Dorsolateral prefrontal cortex (tissue), 120 donors: ENCODE measurements at regions of chr16 and their contacts with region 1.

Region 1: DNA sequence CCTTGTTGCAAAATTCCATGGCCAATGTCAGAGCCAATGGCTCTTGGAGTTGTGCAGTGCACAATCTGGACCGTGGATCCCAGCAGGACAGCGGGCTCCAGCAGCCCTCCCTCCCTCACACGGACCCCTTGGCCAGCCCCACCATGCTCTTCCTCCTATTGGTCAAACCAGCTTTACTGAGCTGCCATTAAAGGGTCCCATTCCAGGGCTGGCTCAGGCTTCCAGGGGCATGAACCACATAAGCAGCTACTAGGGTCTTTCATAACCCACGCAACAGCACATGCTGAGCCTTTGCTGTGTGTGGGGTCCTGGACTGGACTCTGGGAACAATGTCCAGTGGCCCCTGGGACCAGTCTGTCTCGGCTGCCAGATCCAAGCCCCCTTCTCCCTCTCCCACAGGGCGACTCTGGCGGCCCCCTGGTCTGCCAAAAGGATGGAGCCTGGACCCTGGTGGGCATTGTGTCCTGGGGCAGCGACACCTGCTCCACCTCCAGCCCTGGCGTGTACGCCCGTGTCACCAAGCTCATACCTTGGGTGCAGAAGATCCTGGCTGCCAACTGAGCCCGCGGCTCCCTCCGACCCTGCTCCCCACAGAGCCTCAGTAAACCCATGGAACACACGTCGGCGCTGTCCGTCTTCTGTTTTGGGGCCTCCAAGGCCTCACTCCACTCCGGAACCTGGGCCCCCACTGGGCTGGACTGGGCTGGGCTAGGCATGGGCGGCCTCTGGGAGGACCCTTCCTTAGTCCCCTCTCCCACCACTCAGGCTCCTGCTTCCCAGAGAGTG is 5.7 kb downstream of the CTRB1 start:
- DNase-seq: no peak
- H3K4me3 ChIP-seq: no peak overlapping the region
- H3K27ac ChIP-seq: no peak overlapping the region
- H3K27me3 ChIP-seq: peaks cover 0 to 3% (median 0%) of the 10 kb centered on the region in 45 donors
- CTCF ChIP-seq: no peak

Region 2: GRCh38 chr16:75206749-75207451 is 17.6 kb before region 1 on chr16 and contains the start of gene CTRB2:
- intact Hi-C with region 1: loop called in 1 of 2 experiments (anchors 2 kb)
- DNase-seq: no peak
- H3K4me3 ChIP-seq: no peak within 1 kb of the TSS
- H3K27ac ChIP-seq: no peak within 1 kb of the TSS
- H3K27me3 ChIP-seq: peaks cover 0 to 9% (median 0%) of the 10 kb centered on the region in 45 donors
- CTCF ChIP-seq: no peak
- total RNA-seq, gene CTRB2: 0.61 to 0.94 (median 0.63) TPM in 3 of 120 experiments, not detected in the others

Region 3: GRCh38 chr16:75372236-75372856 is 147.8 kb after region 1 on chr16:
- intact Hi-C with region 1: no loop called
- DNase-seq: no peak
- H3K4me3 ChIP-seq: no peak overlapping the region
- H3K27ac ChIP-seq: no peak overlapping the region
- H3K27me3 ChIP-seq: no peaks in the 10 kb centered on the region
- CTCF ChIP-seq: no peak